Activated T-helper 1 cell treated with anti-CD3 and anti-CD28 coated beads, Interleukin-12 subunit alpha, Interleukin-12 subunit beta, Interleukin-2, Interleukin-4 antibody, amounts not matched to agents 30 ng/mL and 10 ng/mL and 1 ng/mL, durations not matched to agents 14 hours and 24 hours and 36 hours (primary cell): ENCODE measurements at regions of chr1 and their contacts with region 1.

Region 1: GRCh38 chr1:1115786-1116700 is at the start of gene C1orf159:
- DNase-seq: peak; percentile 98
- H3K4me3 Mint-ChIP-seq: peak within 1 kb of the TSS; percentile 87
- H3K27ac Mint-ChIP-seq: peak within 1 kb of the TSS; percentile 83
- H3K4me1 Mint-ChIP-seq: no peaks in the 10 kb centered on the region
- H3K27me3 Mint-ChIP-seq: peaks cover 8% of the 10 kb centered on the region
- total RNA-seq, gene C1orf159: 30.0 and 30.3 TPM in 2 replicates

Region 2: DNA sequence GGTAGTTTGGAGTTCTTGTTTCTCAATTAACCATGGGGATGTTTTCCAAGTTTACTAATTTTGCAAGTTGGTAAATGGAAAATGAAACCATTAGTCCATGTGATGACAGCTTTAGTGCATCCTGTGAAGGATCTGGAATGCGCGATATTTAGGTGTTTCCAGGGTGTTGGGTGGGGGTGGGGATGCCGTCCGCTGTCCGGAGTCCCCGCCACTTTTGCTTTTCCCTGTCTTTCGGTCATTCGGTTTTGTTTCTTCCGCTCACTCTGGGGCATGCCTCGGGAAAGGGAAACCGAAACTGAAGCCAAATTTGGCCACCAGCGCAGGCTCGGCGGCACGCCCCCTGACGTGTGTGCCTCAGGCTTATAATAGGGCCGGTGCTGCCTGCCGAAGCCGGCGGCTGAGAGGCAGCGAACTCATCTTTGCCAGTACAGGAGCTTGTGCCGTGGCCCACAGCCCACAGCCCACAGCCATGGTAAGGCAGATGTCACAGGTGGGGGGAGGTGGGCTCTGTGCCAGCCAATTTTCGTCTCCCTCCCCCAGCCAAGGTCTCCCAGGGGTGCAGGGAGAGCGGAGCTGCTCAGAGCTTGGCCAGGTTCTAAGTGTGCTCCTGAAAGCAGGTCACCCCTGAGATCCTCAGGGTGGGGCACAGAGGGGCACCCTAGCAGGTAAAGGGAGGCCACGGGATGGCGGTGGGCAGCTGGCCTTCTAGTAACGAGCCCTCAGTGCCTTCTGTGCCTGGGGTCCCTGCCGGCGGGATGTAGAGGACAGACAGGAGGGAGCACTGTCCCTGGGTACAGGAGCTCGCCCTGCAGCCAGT is 102.7 kb before region 1 on chr1 and contains the start of gene ISG15:
- intact Hi-C with region 1: loop called (anchors 2 kb)
- DNase-seq: peak; percentile 89
- H3K4me3 Mint-ChIP-seq: peak within 1 kb of the TSS; percentile 89
- H3K27ac Mint-ChIP-seq: peak within 1 kb of the TSS; percentile 96
- H3K4me1 Mint-ChIP-seq: peaks cover 37% of the 10 kb centered on the region
- H3K27me3 Mint-ChIP-seq: peaks cover 5% of the 10 kb centered on the region
- total RNA-seq, gene ISG15: 52.9 and 53.7 TPM in 2 replicates

Region 3: DNA sequence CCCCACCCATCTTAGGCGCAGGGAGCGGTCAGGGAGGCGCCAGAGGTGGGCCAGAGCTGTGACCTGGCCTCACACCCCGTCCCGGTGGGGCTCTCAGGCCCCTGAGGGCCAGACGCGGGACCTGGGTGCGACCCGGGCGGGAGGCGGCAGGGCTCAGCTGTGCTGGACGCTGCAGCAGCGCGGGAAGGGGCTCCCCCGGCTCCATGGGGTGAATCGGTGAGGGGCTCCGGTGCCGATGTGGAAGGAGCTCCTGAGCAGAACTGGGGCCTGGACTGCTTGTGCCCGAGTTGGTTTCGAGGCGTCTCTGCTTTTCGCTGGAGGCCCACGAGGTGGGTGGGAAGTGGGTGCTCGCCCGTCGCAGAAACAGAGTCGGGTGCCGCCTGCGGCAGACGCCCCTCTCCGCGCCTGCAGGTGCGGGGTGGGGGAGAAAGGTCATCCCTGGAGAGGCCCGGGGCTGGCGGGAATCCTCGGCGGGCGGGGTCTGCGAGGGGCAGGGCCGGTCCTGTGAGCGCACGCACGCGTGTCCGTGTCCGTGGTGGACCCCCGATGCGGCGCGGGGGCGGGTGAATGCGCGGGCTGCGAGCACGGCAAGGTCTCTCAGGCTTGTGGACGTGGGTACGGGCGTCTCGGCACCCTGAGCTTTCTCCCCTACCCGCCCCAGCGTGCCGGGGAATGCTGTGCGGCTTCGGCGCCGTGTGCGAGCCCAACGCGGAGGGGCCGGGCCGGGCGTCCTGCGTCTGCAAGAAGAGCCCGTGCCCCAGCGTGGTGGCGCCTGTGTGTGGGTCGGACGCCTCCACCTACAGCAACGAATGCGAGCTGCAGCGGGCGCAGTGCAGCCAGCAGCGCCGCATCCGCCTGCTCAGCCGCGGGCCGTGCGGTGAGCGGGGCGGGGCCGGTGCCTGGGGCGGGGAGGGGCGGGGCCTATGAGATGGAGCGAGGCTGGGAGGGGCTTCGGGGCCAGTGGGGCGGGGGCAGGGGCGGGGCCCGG is 75.7 kb before region 1 on chr1:
- intact Hi-C with region 1: no loop called
- DNase-seq: peak; percentile 78
- H3K4me3 Mint-ChIP-seq: peak overlapping the region; percentile 64
- H3K27ac Mint-ChIP-seq: no peak overlapping the region
- H3K4me1 Mint-ChIP-seq: peaks cover 14% of the 10 kb centered on the region
- H3K27me3 Mint-ChIP-seq: peaks cover 16% of the 10 kb centered on the region

Region 4: DNA sequence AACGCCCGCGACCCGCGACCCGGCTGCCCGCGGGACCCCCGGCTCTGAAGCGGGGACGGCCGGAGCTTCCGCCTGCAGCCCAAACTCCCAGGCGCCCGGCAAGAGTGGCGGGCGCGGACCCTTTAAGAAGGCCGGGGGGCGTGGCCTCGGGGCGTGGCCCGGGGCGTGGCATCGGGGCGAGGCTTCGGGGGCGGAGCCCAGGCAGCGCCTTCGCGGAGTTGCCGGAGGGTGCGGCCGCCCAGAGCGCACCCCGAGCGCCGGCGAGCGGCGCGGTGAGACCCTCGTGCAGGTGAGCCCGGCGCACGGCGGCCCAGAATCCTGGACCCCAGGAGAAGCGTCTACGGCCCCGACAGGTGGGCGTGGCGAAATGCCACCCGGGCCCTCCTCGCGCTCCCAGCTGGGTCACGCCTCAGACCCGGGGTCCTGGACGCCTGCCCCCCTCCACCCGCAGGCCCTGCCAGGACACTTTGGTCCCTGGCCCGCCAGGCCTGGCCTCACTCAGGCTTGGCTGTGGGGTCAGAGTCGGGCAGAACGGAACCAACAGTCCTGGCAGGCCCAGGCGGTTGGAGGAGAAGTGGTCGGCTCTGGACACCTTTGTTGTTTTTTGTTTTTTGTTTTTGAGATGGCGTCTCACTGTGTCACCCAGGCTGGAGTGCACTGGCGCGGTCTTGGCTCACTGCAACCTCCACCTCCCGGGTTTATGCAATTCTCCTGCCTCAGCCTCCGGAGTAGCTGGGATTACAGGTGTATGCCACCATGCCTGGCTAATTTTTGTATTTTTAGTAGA is 56.4 kb before region 1 on chr1:
- intact Hi-C with region 1: loop called (anchors 2 kb)
- DNase-seq: peak; percentile 85
- H3K4me3 Mint-ChIP-seq: peak overlapping the region; percentile 86
- H3K27ac Mint-ChIP-seq: no peak overlapping the region
- H3K4me1 Mint-ChIP-seq: no peaks in the 10 kb centered on the region
- H3K27me3 Mint-ChIP-seq: peaks cover 25% of the 10 kb centered on the region

Region 5: DNA sequence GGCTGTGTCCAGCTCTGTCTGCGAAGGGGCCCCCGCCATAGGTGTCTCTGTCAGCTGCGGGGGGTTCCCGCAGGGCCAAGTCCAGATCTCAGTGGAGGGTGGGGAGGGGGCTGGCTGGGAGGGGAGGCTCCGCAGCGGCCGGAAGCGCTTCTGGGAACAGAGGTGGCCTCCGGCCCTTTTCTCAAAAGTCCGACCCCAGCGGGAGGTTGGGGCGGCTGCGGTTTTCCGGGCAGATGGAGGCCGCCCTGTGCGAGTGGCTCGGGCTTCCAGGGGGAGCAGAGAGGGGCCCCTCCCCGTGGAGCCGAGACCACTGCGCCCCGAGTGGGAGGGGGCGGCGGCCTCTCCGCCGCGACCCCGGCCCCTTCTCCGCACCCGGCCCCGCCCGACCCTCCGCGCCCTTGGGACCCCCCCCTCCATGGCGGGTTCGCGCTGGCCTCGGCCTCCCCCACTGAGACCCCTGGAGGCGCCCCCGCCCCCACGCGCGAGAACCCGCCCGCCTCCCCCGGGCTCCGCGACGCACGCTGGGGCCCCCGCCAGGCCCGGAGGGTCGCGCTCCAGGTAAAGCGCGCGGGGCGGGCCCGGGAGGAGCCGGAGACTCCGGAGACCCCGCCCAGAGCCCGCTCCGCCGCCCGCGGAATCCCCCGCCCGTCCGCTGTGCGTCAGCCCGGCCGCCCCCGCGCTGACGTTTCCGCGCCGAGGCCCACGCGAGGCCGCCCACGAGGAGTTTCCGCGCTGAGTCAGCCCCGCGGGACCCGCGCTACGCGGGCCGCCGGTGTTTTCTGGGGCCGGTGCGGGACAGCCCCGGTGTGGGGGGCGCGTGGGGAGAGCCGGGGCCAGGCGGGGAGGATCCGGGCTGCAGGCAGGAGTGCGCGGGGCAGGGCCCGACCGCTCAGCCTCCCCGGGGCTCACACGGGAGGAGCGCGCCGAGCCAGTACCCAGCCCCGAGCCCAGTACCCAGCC is 85.1 kb after region 1 on chr1:
- intact Hi-C with region 1: loop called (anchors 1 kb)
- DNase-seq: peak; percentile 88
- H3K4me3 Mint-ChIP-seq: peak overlapping the region; percentile 68
- H3K27ac Mint-ChIP-seq: peak overlapping the region; percentile 89
- H3K4me1 Mint-ChIP-seq: peaks cover 6% of the 10 kb centered on the region
- H3K27me3 Mint-ChIP-seq: no peaks in the 10 kb centered on the region

Region 6: GRCh38 chr1:1231400-1232223 is 115.6 kb after region 1 on chr1 and contains the start of gene SDF4:
- intact Hi-C with region 1: loop called (anchors 1 kb)
- DNase-seq: peak; percentile 98
- H3K4me3 Mint-ChIP-seq: peak within 1 kb of the TSS; percentile 94
- H3K27ac Mint-ChIP-seq: peak within 1 kb of the TSS; percentile 90
- H3K4me1 Mint-ChIP-seq: peaks cover 27% of the 10 kb centered on the region
- H3K27me3 Mint-ChIP-seq: no peaks in the 10 kb centered on the region
- total RNA-seq, gene SDF4: 202 TPM in 2 replicates

Region 7: DNA sequence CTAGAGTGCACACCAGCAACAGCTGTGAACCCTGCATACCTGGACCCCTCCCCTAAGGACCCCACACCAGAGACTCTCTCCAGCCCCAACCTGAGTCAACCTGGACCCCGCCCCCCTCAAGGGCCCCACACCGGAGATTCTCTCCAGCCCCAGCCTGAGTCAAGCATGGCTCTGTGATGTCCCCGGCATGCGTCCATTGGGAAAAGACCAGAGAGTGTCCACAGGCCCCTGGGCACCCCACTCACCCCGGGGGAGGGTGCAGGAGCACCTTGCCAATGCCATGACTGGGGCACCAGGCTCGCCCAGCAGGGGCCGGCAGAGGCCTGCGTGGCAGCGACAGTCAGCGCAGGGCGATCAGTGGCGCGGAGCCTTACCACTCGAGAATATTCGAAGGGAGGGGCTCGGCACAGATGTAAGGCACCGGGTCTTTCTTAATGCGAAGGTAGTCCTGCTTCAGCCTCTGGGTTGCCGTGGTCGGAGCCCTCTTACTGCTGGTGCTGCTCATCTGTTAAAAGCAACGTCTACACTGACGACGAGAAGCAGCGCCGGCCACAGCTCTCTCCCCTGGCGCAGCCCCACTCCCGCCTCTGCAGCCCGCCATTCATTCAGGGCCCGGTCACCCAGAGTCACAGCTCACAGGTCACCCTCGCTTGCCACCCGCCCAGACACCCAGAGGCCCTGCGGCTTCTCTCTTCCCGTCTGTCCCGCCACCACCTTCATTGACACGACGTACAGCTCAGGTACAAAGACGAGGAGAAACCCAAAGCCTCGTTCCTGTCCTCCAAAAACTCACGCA is 151.6 kb after region 1 on chr1:
- intact Hi-C with region 1: no loop called
- DNase-seq: no peak
- H3K4me3 Mint-ChIP-seq: no peak overlapping the region
- H3K27ac Mint-ChIP-seq: no peak overlapping the region
- H3K4me1 Mint-ChIP-seq: peaks cover 30% of the 10 kb centered on the region
- H3K27me3 Mint-ChIP-seq: no peaks in the 10 kb centered on the region

Region 8: DNA sequence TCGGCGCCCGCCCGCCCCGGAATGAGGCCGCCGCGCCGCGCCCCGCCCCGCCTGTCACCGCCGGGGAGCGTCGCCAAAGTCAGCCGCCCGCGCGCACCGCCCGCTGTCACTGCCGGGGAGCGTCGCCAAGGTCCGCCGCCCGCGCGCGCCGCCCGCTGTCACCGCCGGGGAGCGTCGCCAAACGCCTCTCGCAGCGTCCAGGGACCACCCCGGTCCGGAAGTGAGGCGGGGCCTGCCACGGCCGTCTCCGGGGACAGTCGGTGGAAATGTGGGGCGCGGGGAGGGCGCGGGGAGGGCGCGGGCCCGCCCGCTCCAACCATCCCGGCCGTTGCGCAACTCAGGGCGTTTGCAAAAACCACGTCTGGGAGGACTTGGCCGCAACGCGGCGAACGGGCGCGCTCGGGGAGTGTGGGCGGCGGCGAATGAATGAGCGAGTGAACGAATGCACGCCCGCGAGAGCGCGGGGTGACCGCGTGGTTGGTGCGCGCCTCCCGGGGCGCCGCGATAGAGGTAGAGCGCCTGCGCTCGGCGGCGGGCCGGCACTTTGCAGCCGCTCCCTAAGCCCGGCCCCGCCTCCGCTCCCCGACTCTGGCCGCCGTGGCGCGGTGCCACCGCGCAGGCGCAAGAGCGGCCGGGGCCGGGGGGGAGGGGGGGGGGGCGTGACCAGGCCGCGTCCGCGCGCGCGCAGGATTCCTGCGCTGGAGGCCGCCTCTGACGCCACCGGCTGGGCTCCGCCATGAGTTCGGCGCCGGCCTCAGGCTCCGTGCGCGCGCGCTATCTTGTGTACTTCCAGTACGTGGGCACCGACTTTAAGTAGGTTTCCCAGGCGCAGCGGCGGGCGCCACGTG is 192.1 kb after region 1 on chr1 and contains the starts of genes ACAP3 and PUSL1:
- intact Hi-C with region 1: loop called (anchors 1 kb)
- DNase-seq: peak; percentile 86
- H3K4me3 Mint-ChIP-seq: peak within 1 kb of the TSS; percentile 88
- H3K27ac Mint-ChIP-seq: peak within 1 kb of the TSS; percentile 86
- H3K4me1 Mint-ChIP-seq: peaks cover 15% of the 10 kb centered on the region
- H3K27me3 Mint-ChIP-seq: no peaks in the 10 kb centered on the region
- total RNA-seq, gene ACAP3: 47.7 and 55.1 TPM in 2 replicates
- total RNA-seq, gene PUSL1: 34.6 and 36.8 TPM in 2 replicates

Region 9: DNA sequence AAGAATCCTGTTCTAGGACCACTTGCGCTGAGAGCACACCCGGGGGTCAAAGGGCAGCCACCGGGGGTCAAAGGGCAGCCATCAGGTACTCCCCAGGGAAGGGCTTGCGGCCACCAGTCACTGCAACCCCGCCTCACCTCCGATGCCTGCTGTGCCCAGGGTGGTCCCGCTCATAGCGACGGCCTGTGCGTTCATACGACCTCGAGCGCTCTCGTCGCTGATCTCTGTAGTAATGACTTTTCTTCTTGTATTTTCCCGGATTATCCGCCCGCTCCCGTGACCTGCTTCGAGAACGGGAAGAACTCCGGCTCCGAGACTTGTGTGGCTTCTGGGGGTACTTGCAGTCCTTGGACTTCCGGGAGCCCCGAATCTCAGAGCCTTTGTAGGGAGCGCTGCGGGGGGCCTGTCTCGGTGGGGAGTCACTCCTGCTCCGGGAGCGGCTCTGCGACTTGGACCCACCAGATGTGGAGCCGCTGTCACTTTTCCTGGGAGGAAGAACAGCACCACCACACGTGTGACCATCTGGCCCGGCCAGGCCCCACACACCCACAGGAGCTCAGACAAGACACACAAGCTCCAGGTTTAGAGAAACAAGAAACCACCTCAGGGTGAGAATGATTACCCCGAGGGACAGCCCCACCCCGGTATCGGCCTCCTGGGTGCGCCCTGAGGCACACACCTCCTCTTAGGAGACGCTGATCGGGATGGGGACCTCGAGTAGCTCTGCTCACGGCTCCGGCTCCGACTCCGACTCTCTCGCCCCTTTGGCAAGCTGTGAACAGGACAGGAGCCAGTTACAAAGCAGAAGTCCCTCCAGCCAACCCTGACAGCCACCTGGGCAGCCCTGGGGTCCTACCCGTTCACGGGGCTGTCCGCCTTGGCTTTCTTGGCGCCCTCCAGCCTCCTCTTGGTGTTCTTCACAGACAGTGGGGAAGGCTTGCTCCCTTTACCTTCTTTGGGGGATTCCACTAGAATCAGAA is 271.3 kb after region 1 on chr1:
- intact Hi-C with region 1: no loop called
- DNase-seq: no peak
- H3K4me3 Mint-ChIP-seq: no peak overlapping the region
- H3K27ac Mint-ChIP-seq: no peak overlapping the region
- H3K4me1 Mint-ChIP-seq: no peaks in the 10 kb centered on the region
- H3K27me3 Mint-ChIP-seq: no peaks in the 10 kb centered on the region

Region 10: DNA sequence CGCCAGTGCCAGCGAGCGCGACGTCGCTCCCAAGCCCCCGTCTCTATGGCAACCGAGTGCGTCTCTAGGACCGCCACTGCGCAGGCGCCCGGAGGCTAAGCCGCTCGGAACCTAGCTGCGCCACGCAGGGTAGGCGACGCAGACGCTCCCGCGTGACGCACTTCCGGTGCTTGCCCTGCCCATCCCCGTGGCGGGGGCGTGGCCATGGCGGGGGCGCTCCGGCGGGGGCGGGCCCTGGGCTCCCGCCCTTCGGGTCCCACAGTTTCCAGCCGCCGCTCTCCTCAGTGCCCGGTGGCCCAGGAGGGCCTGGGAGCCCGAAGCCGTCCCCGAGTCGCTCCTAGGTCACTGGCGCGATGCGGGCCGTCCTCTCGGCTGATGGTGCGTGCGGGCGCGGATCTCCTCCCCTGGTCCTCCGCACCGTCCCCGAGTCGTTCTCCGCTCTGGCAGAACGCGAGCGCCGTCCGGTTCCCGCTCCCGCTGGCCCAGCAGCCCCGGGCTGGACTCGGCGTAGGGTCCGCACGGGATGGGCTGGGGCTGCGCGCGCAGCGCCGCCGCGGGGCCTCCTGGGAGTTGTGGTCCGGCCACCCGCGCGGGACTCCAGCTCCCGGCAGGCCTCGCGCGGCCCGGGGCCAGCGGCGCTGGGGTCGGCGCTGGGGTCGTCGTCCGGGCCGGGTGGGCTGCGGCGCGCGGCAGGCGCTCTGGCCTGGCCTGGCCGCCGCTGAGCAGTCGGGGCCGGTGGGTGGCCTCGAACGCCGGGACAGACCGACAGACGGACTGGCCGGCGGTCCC is 499.4 kb after region 1 on chr1 and contains the start of gene MIB2:
- intact Hi-C with region 1: loop called (anchors 1 kb)
- DNase-seq: peak; percentile 98
- H3K4me3 Mint-ChIP-seq: peak within 1 kb of the TSS; percentile 92
- H3K27ac Mint-ChIP-seq: peak within 1 kb of the TSS; percentile 99
- H3K4me1 Mint-ChIP-seq: peaks cover 25% of the 10 kb centered on the region
- H3K27me3 Mint-ChIP-seq: no peaks in the 10 kb centered on the region
- total RNA-seq, gene MIB2: 29.5 and 32.8 TPM in 2 replicates